Gastrocnemius medialis (tissue), 4 donors: ENCODE measurements at regions of chr11 and their contacts with region 1.

Region 1: DNA sequence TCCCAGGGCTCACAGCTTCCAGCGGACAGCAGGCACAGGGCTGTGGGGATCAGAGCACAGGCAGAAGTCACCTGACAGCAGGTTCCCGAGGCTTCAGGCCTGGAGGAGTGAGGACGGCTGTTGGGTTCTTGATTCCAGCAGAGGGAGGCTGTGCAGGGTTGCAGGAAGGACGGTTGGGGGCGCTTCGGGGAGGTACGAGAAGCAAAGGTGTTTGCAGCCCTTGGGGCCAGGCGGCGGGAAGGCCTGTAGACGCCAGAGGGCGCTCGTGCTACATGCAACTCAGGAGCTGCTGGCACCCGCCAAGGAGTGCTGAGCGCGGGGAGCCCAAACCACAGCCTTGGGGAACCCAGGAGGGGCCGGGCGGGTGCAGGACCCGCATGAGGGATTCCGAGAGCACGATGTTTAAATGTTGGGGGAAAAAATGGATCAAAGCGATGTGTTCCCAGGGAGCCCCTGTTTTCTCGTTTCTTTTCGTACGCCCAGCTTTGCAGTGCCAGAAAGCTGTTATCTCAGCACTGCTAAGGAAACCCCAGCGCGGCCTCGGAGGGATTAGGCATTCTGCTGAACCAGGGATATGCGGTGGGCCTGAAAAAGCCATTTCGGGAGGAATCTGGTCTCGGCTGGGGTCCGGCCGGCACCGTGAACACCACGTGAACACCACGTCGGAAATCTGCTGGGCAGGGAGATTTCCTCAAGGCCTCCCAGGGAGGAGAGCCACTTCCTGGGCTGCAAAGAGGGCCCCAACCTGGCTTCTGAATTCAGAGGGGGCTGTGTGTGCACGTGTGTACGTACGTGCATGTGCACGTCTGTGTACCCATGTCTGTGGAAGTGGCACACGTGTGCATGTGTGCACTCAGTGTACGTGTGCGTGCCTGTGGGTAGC is 88.1 kb downstream of the KCNQ1 start:
- DNase-seq: peak; percentile 69 to 76
- ATAC-seq: peak; percentile 80 to 87
- H3K4me3 ChIP-seq: peak overlapping the region in 3 of 4 donors; percentile 29 to 42 (median 42)
- H3K27ac ChIP-seq: peak overlapping the region in 1 of 4 donors; percentile 24
- H3K4me1 ChIP-seq: peaks cover 6 to 7% of the 10 kb centered on the region in 2 donors
- H3K27me3 ChIP-seq: no peaks in the 10 kb centered on the region
- CTCF ChIP-seq: peak; percentile 98 to 100 (median 99)
- POLR2A ChIP-seq: no peak

Region 2: DNA sequence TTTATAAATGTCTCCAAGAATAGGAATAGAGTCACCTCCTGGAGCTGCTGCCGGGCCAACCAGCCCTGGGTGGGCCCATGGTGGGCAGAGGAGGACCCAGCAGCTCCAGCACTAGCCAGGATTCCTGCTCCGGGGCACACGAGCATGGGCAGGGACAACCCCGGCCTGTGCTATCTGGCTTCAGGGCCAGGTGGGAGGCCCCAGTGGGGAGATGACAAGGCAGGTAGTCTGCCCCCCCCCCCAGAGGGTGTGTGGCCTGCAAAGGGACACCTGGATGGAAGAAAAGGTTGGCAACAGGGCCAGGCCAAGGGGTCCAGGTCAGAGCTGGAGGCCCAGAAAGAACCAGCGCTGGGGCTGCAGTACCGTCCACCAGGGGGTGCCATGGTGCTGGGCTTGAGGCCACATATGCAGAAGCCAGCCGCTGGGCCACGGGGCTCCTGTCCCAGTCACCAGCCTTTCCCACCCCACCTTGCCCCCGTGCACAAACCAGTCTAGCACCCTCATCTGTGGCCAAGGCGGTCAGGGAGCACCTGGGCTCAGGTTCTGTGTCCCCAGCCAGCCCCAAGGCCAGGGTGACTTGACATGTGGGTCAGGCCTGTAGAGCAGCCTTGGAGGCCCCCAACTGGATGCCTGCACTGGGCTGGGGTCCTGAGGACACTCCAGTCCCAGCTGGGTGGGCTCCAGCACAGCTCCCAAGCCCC is 227.7 kb before region 1 on chr11:
- in situ Hi-C with region 1: no loop called
- intact Hi-C with region 1: loop called (anchors 10 kb)
- DNase-seq: peak; percentile 59 to 64
- ATAC-seq: peak; percentile 68 to 86
- H3K4me3 ChIP-seq: no peak overlapping the region
- H3K27ac ChIP-seq: no peak overlapping the region
- H3K4me1 ChIP-seq: peaks cover 0 to 7% of the 10 kb centered on the region in 2 donors
- H3K27me3 ChIP-seq: no peaks in the 10 kb centered on the region
- CTCF ChIP-seq: peak; percentile 70 to 94 (median 93)
- POLR2A ChIP-seq: no peak

Region 3: GRCh38 chr11:2414616-2415015 is 118.3 kb before region 1 on chr11:
- in situ Hi-C with region 1: no loop called
- intact Hi-C with region 1: no loop called
- DNase-seq: no peak
- ATAC-seq: no peak
- H3K4me3 ChIP-seq: no peak overlapping the region
- H3K27ac ChIP-seq: no peak overlapping the region
- H3K4me1 ChIP-seq: no peaks in the 10 kb centered on the region
- H3K27me3 ChIP-seq: no peaks in the 10 kb centered on the region
- CTCF ChIP-seq: no peak
- POLR2A ChIP-seq: no peak

Region 4: GRCh38 chr11:2428322-2428795 is 104.6 kb before region 1 on chr11:
- in situ Hi-C with region 1: loop called (anchors 5 to 10 kb)
- intact Hi-C with region 1: loop called (anchors 1 kb)
- DNase-seq: peak in 1 of 2 donors; percentile 50
- ATAC-seq: peak in 1 of 2 donors; percentile 78
- H3K4me3 ChIP-seq: no peak overlapping the region
- H3K27ac ChIP-seq: no peak overlapping the region
- H3K4me1 ChIP-seq: no peaks in the 10 kb centered on the region
- H3K27me3 ChIP-seq: no peaks in the 10 kb centered on the region
- CTCF ChIP-seq: peak; percentile 66 to 88 (median 77)
- POLR2A ChIP-seq: no peak

Region 5: GRCh38 chr11:2699531-2700414 is 166.8 kb after region 1 on chr11 and contains the start of gene KCNQ1OT1:
- in situ Hi-C with region 1: no loop called
- intact Hi-C with region 1: loop called (anchors 5 kb)
- DNase-seq: peak; percentile 89 to 94
- ATAC-seq: peak; percentile 79 to 83
- H3K4me3 ChIP-seq: peak within 1 kb of the TSS; percentile 73 to 91 (median 78)
- H3K27ac ChIP-seq: peak within 1 kb of the TSS; percentile 89 to 97 (median 92)
- H3K4me1 ChIP-seq: peaks cover 19 to 21% of the 10 kb centered on the region in 2 donors
- H3K27me3 ChIP-seq: no peaks in the 10 kb centered on the region
- CTCF ChIP-seq: no peak
- POLR2A ChIP-seq: peak; percentile 91 to 92
- total RNA-seq, gene KCNQ1OT1: 0.16 to 0.61 (median 0.30) TPM

Region 6: GRCh38 chr11:2892215-2893020 is 359.5 kb after region 1 on chr11:
- in situ Hi-C with region 1: loop called in 3 of 4 experiments (anchors 5 kb)
- intact Hi-C with region 1: loop called (anchors 1 kb)
- DNase-seq: no peak
- ATAC-seq: peak in 1 of 2 donors; percentile 25
- H3K4me3 ChIP-seq: peak overlapping the region; percentile 32 to 47 (median 36)
- H3K27ac ChIP-seq: peak overlapping the region in 3 of 4 donors; percentile 23 to 31 (median 29)
- H3K4me1 ChIP-seq: peaks cover 5 to 12% of the 10 kb centered on the region in 2 donors
- H3K27me3 ChIP-seq: no peaks in the 10 kb centered on the region
- CTCF ChIP-seq: peak; percentile 80 to 93 (median 92)
- POLR2A ChIP-seq: no peak